A673 (cell line): ENCODE measurements at regions of chr4 and their contacts with region 1.

Region 1: GRCh38 chr4:83074086-83074704 is 39.2 kb downstream of the COPS4 start:
- DNase-seq: peak; percentile 72
- H3K4me3 ChIP-seq: no peak overlapping the region
- H3K27ac ChIP-seq: no peak overlapping the region
- H3K4me1 ChIP-seq: no peaks in the 10 kb centered on the region
- H3K27me3 ChIP-seq: no peaks in the 10 kb centered on the region
- CTCF ChIP-seq: peak; percentile 62

Region 2: GRCh38 chr4:83012687-83013419 is 61.3 kb before region 1 on chr4:
- CTCF ChIA-PET with region 1: no interaction called
- POLR2A ChIA-PET with region 1: no interaction called
- intact Hi-C with region 1: no loop called
- DNase-seq: peak; percentile 94
- H3K4me3 ChIP-seq: peak overlapping the region; percentile 71
- H3K27ac ChIP-seq: peak overlapping the region; percentile 77
- H3K4me1 ChIP-seq: no peaks in the 10 kb centered on the region
- H3K27me3 ChIP-seq: no peaks in the 10 kb centered on the region
- CTCF ChIP-seq: peak; percentile 45; the same call in 1 of the 2 replicates

Region 3: GRCh38 chr4:83112678-83113428 is 38.7 kb after region 1 on chr4:
- CTCF ChIA-PET with region 1: interaction called, 10 read pairs
- POLR2A ChIA-PET with region 1: no interaction called
- intact Hi-C with region 1: no loop called
- DNase-seq: no peak
- H3K4me3 ChIP-seq: no peak overlapping the region
- H3K27ac ChIP-seq: no peak overlapping the region
- H3K4me1 ChIP-seq: no peaks in the 10 kb centered on the region
- H3K27me3 ChIP-seq: no peaks in the 10 kb centered on the region
- CTCF ChIP-seq: no peak

Region 4: GRCh38 chr4:83261307-83261706 is 187.1 kb after region 1 on chr4:
- CTCF ChIA-PET with region 1: interaction called, 7 read pairs
- POLR2A ChIA-PET with region 1: no interaction called
- intact Hi-C with region 1: loop called (anchors 5 kb)
- DNase-seq: no peak
- H3K4me3 ChIP-seq: no peak overlapping the region
- H3K27ac ChIP-seq: no peak overlapping the region
- H3K4me1 ChIP-seq: no peaks in the 10 kb centered on the region
- H3K27me3 ChIP-seq: no peaks in the 10 kb centered on the region
- CTCF ChIP-seq: no peak